MCF 10A (cell line): ENCODE measurements at regions of chr2 and their contacts with region 1.

Region 1: GRCh38 chr2:207238831-207239701 is 73.3 kb upstream of the KLF7 start:
- DNase-seq: peak; percentile 99
- H3K4me3 Mint-ChIP-seq: no peak overlapping the region
- H3K27ac Mint-ChIP-seq: no peak overlapping the region
- H3K4me1 Mint-ChIP-seq: peaks cover 15% of the 10 kb centered on the region
- H3K27me3 Mint-ChIP-seq: no peaks in the 10 kb centered on the region
- CTCF ChIP-seq: no peak

Region 2: DNA sequence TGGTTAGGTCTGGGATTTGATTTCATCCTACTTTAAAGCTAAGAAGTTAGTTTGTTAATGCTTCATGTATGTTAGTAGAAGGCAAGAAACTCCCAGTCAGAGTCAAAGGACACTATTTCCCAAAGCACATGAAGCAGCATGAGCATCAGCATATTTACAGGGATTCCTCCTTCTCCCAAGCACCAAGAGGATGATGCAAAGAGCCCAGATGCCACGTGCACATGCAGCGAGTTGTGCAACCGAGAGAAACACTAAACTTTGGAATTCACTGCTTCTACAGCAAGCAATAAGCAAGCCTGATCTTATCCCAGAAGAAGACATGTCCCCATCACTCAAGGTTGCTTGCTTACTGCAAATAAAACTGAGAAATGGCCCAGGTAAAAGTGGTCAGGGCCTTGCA is 267.3 kb before region 1 on chr2:
- CTCF ChIA-PET with region 1: no interaction called
- POLR2A ChIA-PET with region 1: no interaction called
- intact Hi-C with region 1: no loop called
- DNase-seq: peak; percentile 69
- H3K4me3 Mint-ChIP-seq: no peak overlapping the region
- H3K27ac Mint-ChIP-seq: peak overlapping the region; percentile 32
- H3K4me1 Mint-ChIP-seq: peaks cover 29% of the 10 kb centered on the region
- H3K27me3 Mint-ChIP-seq: no peaks in the 10 kb centered on the region
- CTCF ChIP-seq: no peak

Region 3: DNA sequence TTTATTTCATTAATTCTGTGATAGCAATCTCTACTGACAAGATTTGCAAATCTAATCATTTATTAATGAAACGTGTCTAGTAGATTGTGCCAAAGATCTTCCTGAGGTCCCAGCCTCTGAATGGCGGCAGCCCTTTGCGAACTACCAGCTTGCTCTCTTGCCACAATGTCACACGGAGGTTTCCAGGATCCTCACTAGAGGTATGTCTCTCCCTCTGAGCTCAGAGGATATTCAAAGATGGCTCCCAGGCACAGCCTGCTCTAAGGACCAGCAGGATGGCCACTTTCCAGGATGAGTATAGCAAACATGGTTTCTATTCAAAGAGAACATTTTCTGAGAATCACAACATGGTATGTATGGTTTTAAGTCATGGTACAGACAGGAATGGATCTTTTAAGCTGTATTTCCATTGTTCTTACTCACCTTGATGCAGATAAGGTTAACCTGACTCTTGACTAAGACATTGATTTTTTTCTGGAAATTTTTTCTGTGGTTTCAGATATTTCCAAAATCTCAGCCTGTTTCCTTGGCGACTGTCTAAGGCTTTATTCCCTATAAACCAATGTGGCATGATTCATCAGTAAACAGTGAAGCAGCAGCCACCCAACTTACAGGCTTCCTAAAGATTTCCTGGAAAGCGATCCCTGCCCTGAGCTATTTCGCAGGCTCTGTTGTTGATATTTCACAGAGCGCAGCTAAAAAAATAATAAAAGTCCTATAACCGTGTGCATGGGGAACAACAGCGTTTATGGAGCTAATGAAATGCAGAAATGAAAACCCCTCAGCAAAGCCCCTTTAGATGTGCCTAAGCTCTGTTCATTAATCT is 19.2 kb before region 1 on chr2:
- CTCF ChIA-PET with region 1: interaction called, 3 read pairs
- POLR2A ChIA-PET with region 1: interaction called, 19 read pairs
- intact Hi-C with region 1: no loop called
- DNase-seq: peak; percentile 68
- H3K4me3 Mint-ChIP-seq: no peak overlapping the region
- H3K27ac Mint-ChIP-seq: no peak overlapping the region
- H3K4me1 Mint-ChIP-seq: peaks cover 10% of the 10 kb centered on the region
- H3K27me3 Mint-ChIP-seq: no peaks in the 10 kb centered on the region
- CTCF ChIP-seq: no peak

Region 4: DNA sequence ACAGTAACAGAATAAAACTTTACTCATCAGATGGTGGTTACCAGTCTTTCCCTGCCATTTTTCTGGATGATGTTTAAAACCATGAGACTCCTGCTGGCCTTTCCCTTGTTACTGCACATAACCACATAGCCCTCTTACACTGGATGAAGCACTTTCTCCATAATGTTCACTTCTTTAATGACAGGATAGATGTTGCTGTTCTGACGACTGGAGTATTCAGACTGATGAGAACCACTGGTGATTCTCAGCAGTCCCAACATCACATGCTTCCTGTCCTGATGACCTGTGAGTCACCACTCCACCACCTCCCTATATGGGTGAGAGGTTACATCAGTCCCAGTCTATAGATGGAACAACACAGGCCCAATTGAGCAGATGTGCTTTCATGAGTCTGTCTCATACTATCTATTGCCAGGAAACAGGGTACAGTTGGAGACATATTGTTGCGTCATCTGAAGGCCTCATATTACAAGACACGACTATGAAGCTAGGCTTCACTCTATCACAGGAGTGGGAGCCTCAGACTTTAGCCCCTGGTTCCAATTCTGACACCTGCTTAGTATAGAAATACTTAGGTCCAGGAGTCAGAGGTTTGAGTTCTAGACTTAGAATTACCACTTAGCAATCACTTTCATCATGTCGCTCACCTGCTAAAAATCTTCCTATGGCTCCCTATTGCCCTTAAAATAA is 72.4 kb after region 1 on chr2:
- CTCF ChIA-PET with region 1: no interaction called
- POLR2A ChIA-PET with region 1: interaction called, 6 read pairs
- intact Hi-C with region 1: loop called (anchors 5 kb)
- DNase-seq: peak; percentile 97
- H3K4me3 Mint-ChIP-seq: no peak overlapping the region
- H3K27ac Mint-ChIP-seq: peak overlapping the region; percentile 74
- H3K4me1 Mint-ChIP-seq: peaks cover 27% of the 10 kb centered on the region
- H3K27me3 Mint-ChIP-seq: no peaks in the 10 kb centered on the region
- CTCF ChIP-seq: peak; percentile 23

Region 5: DNA sequence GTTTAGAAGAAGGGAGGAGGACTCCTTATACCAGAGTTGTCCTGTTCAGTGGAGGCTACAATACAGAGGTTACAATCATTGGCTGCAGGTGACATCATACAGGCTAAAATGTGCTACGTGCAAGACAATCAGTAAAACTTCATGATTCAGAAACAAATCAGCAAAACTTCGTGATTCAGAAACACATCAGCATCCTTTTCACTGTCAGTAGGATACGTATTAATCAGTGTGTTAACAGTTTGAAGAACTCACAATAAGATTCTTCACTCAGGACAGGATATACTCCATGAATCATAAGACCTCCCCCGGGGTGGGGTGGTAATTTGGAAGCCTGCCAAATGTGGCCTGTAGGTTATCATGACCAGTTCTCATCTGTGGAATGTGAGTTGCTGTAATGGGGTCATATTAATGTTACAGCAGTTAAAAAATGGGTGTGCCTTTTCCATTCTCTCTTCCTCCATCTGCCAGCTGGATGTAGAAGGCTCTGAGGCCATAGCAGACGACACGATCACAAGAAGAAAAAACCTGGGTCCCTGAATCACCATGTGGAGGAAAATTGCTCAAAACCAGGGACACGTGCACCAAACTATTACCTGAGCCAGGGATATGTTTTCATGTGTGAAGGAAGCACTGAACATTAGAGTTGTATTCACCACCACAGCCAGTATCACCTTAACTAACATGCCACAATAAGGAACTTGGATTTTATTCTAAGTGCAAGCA is 155.9 kb after region 1 on chr2:
- CTCF ChIA-PET with region 1: no interaction called
- POLR2A ChIA-PET with region 1: interaction called, 4 read pairs
- intact Hi-C with region 1: loop called (anchors 1 kb)
- DNase-seq: peak; percentile 97
- H3K4me3 Mint-ChIP-seq: no peak overlapping the region
- H3K27ac Mint-ChIP-seq: peak overlapping the region; percentile 85
- H3K4me1 Mint-ChIP-seq: peaks cover 27% of the 10 kb centered on the region
- H3K27me3 Mint-ChIP-seq: no peaks in the 10 kb centered on the region
- CTCF ChIP-seq: no peak

Region 6: GRCh38 chr2:207417301-207417718 is 178.2 kb after region 1 on chr2:
- CTCF ChIA-PET with region 1: no interaction called
- POLR2A ChIA-PET with region 1: no interaction called
- intact Hi-C with region 1: no loop called
- DNase-seq: no peak
- H3K4me3 Mint-ChIP-seq: no peak overlapping the region
- H3K27ac Mint-ChIP-seq: no peak overlapping the region
- H3K4me1 Mint-ChIP-seq: no peaks in the 10 kb centered on the region
- H3K27me3 Mint-ChIP-seq: no peaks in the 10 kb centered on the region
- CTCF ChIP-seq: no peak

Region 7: DNA sequence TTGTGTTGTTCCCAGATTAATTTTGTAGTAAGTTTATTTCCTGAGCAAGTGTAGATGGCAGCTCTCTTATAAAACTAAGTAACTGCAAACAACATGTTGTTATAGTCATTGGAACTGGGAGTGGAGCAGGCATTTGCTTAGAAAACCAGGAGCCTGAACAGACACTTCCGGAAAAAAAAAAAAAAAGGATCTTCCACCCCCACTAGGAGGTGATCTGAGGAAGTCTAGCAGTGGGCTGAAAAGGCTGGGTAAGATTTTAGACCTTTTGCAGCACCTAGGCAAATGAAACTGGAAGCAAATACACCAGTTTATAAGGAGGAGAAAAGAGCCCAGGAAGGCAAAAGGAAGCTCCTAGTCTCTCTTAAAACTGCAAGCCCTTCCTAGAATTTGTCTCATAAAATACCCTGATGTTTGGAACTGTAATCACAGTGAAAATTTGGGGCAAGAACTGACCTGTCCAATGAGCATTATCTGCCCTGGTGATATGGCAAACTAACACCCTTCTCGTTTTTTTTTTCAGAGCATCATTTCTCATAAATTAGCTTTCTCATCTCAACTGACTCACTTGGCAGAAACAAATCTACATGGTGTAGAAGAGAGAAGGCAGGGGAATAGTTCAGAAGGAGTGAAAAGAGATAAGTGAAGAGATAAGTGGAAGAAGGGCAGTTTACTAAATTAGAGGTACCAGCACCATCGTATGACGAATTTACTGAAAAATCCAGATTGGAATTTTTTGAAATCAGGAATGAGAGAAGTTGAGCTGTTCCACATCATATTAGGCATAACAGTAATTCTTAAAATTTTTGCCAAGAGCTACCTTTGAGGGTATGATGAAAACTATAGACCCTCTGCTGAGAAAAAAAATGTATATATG is 468.1 kb after region 1 on chr2:
- CTCF ChIA-PET with region 1: no interaction called
- POLR2A ChIA-PET with region 1: no interaction called
- intact Hi-C with region 1: no loop called
- DNase-seq: no peak
- H3K4me3 Mint-ChIP-seq: no peak overlapping the region
- H3K27ac Mint-ChIP-seq: peak overlapping the region; percentile 59
- H3K4me1 Mint-ChIP-seq: peaks cover 10% of the 10 kb centered on the region
- H3K27me3 Mint-ChIP-seq: no peaks in the 10 kb centered on the region
- CTCF ChIP-seq: no peak